ENCODE measurements at regions of chr5 and their contacts with region 1.

Region 1: DNA sequence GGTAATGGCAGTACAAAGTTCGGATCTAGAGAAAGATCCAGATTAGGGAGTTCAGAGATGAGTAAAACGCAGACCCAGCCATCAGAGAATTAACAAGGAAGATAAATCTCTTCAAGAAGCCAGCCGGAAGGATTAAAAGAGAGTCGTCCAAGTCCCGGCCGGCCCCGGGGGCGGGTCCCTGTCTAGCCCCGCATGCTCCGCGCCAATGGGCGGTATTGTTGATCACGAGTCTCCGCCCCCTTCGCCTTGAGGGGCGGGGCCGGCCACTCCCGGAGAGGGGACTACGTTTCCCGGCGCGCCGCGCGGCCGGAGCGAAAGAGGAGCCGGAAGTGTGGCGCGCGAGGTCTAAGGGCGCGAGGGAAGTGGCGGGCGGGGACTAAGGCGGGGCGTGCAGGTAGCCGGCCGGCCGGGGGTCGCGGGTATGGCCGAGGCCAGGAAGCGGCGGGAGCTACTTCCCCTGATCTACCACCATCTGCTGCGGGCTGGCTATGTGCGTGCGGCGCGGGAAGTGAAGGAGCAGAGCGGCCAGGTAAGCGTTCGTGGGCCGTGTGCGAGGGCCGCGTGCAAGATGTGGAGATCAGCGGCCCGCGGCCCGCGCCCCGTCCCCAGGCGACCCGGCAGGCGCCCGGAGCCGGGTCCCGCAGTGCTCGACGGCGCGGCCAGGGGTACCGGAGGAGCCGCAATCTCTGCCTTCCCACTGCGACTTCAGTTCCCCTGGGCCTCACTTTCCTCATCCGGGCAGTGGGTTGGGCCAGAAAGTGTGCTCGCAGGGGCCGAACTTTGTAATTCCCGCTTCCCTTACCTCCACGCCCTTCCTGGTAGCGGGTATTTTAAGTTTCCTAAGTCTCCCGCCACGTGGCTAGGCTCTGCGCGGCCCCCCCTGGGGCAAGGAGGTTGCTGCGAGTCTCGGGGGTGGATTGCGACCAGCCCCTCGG is at the start of gene TCOF1:
- DNase-seq: peak; percentile 98
- H3K4me3 Mint-ChIP-seq: peak within 1 kb of the TSS; percentile 87
- H3K27ac Mint-ChIP-seq: peak within 1 kb of the TSS; percentile 82
- H3K4me1 Mint-ChIP-seq: peaks cover 41% of the 10 kb centered on the region
- H3K27me3 Mint-ChIP-seq: no peaks in the 10 kb centered on the region
- total RNA-seq, gene TCOF1: 114 to 115 TPM

Region 2: DNA sequence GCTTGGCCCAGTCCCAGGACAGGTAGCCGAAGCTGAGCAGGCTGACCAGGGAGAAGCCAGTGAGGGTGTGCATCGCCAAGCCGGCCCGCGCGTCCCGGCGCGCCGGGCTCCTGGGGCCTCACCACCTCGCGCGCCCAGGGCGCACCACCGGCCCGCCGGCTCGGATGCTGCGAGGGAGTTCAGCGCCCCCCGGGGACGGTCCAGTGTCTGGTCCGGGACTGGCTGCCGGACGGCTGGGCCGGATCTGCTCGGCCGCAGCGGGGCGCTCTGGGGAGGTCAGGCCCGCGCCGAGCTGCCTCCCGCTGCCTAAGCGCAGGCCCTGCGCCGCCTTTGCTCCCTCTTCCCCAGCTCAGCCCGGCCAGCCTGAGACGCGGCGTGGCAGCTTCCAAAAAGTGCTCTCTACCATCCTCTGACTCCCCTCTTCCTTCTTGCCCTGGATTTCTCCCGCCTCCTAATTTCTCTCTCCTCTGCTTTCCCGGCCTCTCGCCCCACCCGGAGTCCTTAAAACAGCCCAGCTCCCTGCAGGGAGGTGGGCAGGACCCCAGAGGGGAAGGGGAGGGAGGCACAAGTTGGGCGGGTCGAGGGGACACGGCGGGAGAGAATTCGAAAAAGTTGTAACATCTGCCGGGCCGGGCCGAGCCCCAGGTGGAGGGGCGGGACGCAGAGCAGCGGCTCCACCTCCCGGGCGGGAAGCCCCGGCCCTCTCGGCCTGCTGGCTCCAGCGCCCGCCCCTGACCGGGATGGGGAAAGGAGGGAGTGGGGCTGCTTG is 55.1 kb before region 1 on chr5 and contains the start of gene ARSI:
- CTCF ChIA-PET with region 1: no interaction called
- intact Hi-C with region 1: no loop called
- DNase-seq: no peak
- H3K4me3 Mint-ChIP-seq: no peak within 1 kb of the TSS
- H3K27ac Mint-ChIP-seq: no peak within 1 kb of the TSS
- H3K4me1 Mint-ChIP-seq: peaks cover 2% of the 10 kb centered on the region
- H3K27me3 Mint-ChIP-seq: peaks cover 28% of the 10 kb centered on the region
- total RNA-seq, gene ARSI: not detected

Region 3: DNA sequence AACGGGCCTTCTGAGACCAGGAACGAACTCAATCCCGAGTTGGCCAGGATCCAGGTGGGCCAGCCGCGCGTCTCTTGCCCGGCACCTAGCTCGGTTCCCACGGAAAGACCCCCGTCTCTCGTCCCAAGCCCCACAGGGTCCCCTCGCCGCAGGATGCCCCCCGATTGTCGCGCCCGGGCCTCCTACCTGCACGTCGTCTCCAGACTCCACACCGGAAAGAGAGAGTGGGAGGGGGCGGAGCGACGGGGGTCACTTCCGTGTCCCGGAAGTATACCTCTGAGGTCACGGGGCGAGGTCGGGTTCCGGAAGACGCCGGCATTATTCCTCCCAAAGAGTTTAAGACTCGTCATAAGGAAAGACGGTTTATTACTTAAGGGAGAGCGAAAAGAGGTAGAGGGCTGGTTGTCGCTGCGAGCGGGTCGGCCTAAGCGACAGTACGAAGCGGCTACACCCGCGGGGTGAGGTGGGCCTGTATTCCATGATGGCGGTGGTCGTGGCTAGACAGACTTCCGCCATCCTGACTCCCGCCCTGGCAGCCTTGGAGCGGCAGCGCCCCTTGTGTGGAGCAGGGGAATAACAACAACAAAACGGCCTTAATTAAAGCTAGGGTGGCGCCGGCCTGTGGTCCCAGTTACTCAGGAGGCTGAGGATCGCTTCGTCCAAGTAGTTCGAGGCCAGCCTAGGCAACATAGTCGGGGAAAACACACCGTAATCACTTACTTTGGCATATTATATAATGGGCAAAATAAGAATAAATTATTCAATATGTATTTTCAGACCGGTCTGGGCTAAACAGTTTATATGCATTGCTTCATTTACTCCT is 92.1 kb after region 1 on chr5 and contains the start of gene RPS14:
- CTCF ChIA-PET with region 1: interaction called, 6 read pairs
- intact Hi-C with region 1: loop called (anchors 1 kb)
- DNase-seq: peak; percentile 97
- H3K4me3 Mint-ChIP-seq: peak within 1 kb of the TSS; percentile 93
- H3K27ac Mint-ChIP-seq: peak within 1 kb of the TSS; percentile 99
- H3K4me1 Mint-ChIP-seq: peaks cover 33% of the 10 kb centered on the region
- H3K27me3 Mint-ChIP-seq: no peaks in the 10 kb centered on the region
- total RNA-seq, gene RPS14: 4,594 to 4,738 TPM